Activated naive CD4-positive, alpha-beta T cell treated with anti-CD3 and anti-CD28 coated beads for 36 hours (primary cell): ENCODE measurements at regions of chr5 and their contacts with region 1.

Region 1: DNA sequence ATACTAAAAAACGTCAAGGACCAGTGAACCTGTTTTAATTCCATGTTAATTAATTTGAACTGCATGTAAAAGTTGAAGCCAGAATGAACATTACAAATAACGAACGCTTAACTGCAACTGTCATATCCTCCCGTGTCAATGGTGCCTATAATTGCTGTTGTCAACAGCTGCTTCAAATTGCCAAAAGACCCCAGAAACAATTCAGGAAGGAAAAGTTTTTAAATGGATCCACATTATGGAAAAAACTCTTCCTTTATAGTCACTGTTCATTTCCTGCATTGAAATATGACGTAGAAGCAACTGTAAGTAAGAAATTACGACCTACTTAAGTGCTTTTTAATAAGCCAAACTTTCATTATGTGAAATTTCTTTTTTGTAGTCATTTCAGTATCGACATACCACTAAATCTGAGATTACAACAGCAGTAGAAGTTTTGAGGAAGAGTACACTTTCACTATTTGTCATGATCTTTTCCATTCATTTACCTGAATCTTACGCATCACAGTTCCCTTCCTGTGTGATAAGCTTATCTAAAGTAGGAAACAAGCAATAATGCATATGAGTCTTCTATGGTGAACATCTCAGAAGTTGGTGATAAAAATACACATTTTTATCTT is 37.8 kb downstream of the MEF2C start:
- DNase-seq: no peak
- H3K4me3 Mint-ChIP-seq: no peak overlapping the region
- H3K27ac Mint-ChIP-seq: no peak overlapping the region
- H3K4me1 Mint-ChIP-seq: peaks cover 8% of the 10 kb centered on the region
- H3K27me3 Mint-ChIP-seq: peaks cover 14% of the 10 kb centered on the region

Region 2: DNA sequence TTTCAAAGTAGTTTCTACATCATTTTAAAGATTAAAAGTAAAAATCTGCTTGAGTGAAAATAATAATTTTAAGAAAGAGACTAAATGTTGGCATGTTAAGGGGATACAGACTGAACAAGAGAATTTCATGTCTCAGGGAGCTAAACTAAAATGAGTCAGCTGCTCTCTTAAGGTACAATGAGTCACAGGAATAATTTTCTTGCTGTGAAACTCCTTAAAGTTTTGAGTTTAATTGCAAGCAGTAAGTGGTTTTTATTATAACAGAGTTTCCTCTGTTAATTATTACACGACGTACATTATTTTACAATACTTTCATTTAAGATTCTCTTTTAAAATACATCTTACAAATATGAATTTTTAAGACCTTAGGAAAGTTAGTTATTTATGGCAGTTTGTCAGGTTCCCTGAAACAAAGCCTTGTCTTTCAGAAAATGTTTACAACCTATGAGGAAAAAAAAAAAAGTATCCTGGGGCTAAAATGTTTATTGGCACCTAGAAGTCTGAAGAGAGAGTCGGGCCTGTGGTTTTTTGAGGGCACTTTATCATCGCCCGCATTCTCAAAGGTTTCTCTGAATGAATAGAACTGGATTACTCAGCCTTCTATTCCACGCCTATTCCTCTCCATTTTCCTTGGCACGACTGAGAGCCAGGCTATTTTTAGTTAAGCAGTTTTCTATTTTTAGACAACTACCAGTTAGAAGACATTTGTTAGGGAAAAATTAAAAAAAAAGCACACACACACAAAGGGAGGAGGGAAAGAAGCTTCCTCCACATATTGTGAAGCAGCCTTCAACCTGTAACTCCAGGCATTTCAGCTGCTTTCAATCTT is 59.6 kb before region 1 on chr5:
- CTCF ChIA-PET with region 1: no interaction called
- intact Hi-C with region 1: loop called (anchors 1 kb)
- DNase-seq: peak; percentile 13
- H3K4me3 Mint-ChIP-seq: no peak overlapping the region
- H3K27ac Mint-ChIP-seq: no peak overlapping the region
- H3K4me1 Mint-ChIP-seq: peaks cover 15% of the 10 kb centered on the region
- H3K27me3 Mint-ChIP-seq: peaks cover 14% of the 10 kb centered on the region

Region 3: GRCh38 chr5:88833371-88834130 is 11.6 kb before region 1 on chr5:
- CTCF ChIA-PET with region 1: interaction called, 3 read pairs
- intact Hi-C with region 1: loop called (anchors 1 kb)
- DNase-seq: peak; percentile 78
- H3K4me3 Mint-ChIP-seq: no peak overlapping the region
- H3K27ac Mint-ChIP-seq: no peak overlapping the region
- H3K4me1 Mint-ChIP-seq: peaks cover 23% of the 10 kb centered on the region
- H3K27me3 Mint-ChIP-seq: peaks cover 16% of the 10 kb centered on the region

Region 4: DNA sequence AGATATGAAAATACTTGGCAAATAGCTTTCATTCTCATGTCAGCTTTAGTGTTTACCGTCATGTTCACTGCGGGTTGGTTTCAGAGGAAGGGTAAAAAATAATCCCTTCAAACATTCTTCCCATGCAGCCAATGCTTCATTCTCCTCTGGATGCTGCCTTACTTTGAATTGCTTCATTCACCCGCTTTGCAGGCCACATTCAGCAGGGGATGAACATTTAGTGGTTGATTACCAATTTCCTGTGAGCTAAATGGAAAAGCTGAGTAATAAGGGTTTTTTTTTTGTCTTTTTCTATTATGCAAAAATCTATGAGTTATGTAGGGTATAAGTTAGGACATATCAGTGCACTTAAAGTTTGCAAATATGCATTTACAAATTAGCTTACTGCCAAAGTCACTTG is 134.1 kb after region 1 on chr5:
- CTCF ChIA-PET with region 1: no interaction called
- intact Hi-C with region 1: loop called (anchors 1 kb)
- DNase-seq: peak; percentile 12
- H3K4me3 Mint-ChIP-seq: no peak overlapping the region
- H3K27ac Mint-ChIP-seq: no peak overlapping the region
- H3K4me1 Mint-ChIP-seq: peaks cover 4% of the 10 kb centered on the region
- H3K27me3 Mint-ChIP-seq: peaks cover 2% of the 10 kb centered on the region